ENCODE measurements at regions of chr12 and their contacts with region 1.

Region 1: GRCh38 chr12:49967042-49967776 is 5.5 kb downstream of the AQP5 start:
- DNase-seq: peak; percentile 85
- H3K4me3 Mint-ChIP-seq: peak overlapping the region; percentile 68
- H3K27ac Mint-ChIP-seq: no peak overlapping the region
- H3K4me1 Mint-ChIP-seq: peaks cover 10% of the 10 kb centered on the region
- H3K27me3 Mint-ChIP-seq: no peaks in the 10 kb centered on the region
- CTCF ChIP-seq: peak; percentile 87

Region 2: GRCh38 chr12:49730568-49731101 is 236.6 kb before region 1 on chr12:
- CTCF ChIA-PET with region 1: no interaction called
- POLR2A ChIA-PET with region 1: no interaction called
- intact Hi-C with region 1: no loop called
- DNase-seq: peak; percentile 36
- H3K4me3 Mint-ChIP-seq: no peak overlapping the region
- H3K27ac Mint-ChIP-seq: no peak overlapping the region
- H3K4me1 Mint-ChIP-seq: peaks cover 12% of the 10 kb centered on the region
- H3K27me3 Mint-ChIP-seq: peaks cover 17% of the 10 kb centered on the region
- CTCF ChIP-seq: no peak

Region 3: DNA sequence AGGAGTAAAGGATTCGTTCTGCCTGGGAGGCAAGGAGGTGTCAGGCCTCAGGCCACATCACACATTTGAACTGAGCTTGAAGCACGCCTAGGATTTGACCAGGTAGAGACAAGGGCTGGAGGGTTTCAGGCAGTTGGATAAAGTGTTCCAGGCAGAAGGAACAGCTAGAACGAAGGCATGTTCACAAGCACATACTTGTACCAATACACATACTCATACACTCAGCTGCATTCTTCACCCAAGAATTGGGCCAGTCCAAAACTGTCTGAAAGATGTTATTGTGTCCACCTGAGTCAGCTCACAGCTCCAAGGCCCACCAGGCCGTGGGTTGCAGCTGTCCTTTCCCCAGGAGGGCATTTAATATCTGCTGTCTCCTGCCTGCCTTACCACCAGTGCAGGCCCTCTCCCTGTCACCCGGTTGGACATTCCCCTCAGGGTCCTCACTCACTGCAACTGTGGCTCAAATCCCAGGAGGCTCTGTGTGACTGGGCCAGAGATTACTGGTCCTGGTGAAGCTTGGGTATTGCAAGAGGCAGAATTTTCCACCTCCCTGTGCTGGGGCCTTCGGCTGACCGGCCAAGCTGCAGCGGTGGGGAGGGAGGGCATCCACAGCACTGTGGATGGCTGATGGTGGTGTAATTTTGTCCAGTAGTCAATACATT is 29.4 kb before region 1 on chr12:
- CTCF ChIA-PET with region 1: interaction called, 10 read pairs
- POLR2A ChIA-PET with region 1: interaction called, 3 read pairs
- intact Hi-C with region 1: no loop called
- DNase-seq: no peak
- H3K4me3 Mint-ChIP-seq: no peak overlapping the region
- H3K27ac Mint-ChIP-seq: no peak overlapping the region
- H3K4me1 Mint-ChIP-seq: peaks cover 11% of the 10 kb centered on the region
- H3K27me3 Mint-ChIP-seq: no peaks in the 10 kb centered on the region
- CTCF ChIP-seq: no peak

Region 4: GRCh38 chr12:49990273-49990672 is 23.1 kb after region 1 on chr12:
- CTCF ChIA-PET with region 1: interaction called, 12 read pairs
- POLR2A ChIA-PET with region 1: interaction called, 4 read pairs
- intact Hi-C with region 1: no loop called
- DNase-seq: peak; percentile 31
- H3K4me3 Mint-ChIP-seq: no peak overlapping the region
- H3K27ac Mint-ChIP-seq: no peak overlapping the region
- H3K4me1 Mint-ChIP-seq: peaks cover 12% of the 10 kb centered on the region
- H3K27me3 Mint-ChIP-seq: no peaks in the 10 kb centered on the region
- CTCF ChIP-seq: no peak

Region 5: GRCh38 chr12:50038336-50038735 is 71.1 kb after region 1 on chr12:
- CTCF ChIA-PET with region 1: interaction called, 10 read pairs
- POLR2A ChIA-PET with region 1: no interaction called
- intact Hi-C with region 1: no loop called
- DNase-seq: no peak
- H3K4me3 Mint-ChIP-seq: no peak overlapping the region
- H3K27ac Mint-ChIP-seq: no peak overlapping the region
- H3K4me1 Mint-ChIP-seq: peaks cover 7% of the 10 kb centered on the region
- H3K27me3 Mint-ChIP-seq: no peaks in the 10 kb centered on the region
- CTCF ChIP-seq: no peak

Region 6: DNA sequence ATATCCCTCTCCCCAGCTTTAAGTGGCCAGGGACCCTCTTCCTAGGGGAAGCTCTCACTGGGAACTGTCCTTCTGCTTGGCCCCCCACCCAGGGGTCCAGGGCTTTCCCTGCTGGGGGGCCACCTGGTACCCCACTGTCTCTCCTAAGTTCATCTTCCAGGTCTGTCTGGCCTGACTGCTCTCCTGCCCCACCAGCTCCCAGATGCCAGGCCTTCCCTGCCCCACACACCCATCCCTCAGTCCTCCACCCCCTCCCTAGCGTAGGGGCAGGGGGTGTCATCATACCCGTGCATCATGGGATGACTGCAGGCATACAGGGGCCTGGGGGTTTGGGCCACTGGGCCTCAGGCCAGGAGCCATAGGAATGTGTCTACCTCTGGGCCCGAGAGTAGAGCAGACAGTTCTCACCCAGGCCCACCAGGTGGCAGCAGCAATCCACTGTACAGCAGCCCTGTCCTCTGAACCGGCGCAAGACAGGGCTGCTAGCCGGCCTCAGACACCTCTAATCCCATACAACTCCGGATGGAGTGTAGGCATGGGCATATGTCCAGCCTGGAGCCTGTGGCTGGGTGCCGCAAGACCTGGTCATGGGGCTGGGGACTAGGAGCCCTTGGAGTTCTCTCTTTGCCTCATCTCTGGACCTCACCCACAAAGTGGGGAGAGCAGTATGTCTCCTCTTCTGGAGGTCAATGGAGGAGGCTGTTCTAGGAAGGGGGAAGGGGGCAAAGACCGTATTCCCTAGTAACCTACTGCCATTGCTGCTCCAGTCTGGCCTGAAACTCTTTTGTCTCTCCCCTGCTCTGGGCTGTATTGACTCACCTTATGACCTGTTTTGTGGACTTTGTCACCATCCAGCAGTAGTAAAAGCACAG is 108.0 kb after region 1 on chr12:
- CTCF ChIA-PET with region 1: interaction called, 241 read pairs
- POLR2A ChIA-PET with region 1: interaction called, 5 read pairs
- intact Hi-C with region 1: loop called (anchors 1 kb)
- DNase-seq: peak; percentile 85
- H3K4me3 Mint-ChIP-seq: no peak overlapping the region
- H3K27ac Mint-ChIP-seq: peak overlapping the region; percentile 30
- H3K4me1 Mint-ChIP-seq: peaks cover 12% of the 10 kb centered on the region
- H3K27me3 Mint-ChIP-seq: no peaks in the 10 kb centered on the region
- CTCF ChIP-seq: peak; percentile 90

Measured in MCF 10A (cell line).